Common myeloid progenitor, CD34-positive (primary cell): ENCODE measurements at regions of chr15 and their contacts with region 1.

Region 1: GRCh38 chr15:68650901-68651709 is 72.3 kb downstream of the CORO2B start:
- DNase-seq: peak; percentile 43 to 64 (median 55)
- H3K4me3 ChIP-seq: no peak overlapping the region
- H3K27ac ChIP-seq: no peak overlapping the region
- H3K4me1 ChIP-seq: peaks cover 0 to 13% (median 8%) of the 10 kb centered on the region in 4 experiments
- H3K27me3 ChIP-seq: no peaks in the 10 kb centered on the region

Region 2: DNA sequence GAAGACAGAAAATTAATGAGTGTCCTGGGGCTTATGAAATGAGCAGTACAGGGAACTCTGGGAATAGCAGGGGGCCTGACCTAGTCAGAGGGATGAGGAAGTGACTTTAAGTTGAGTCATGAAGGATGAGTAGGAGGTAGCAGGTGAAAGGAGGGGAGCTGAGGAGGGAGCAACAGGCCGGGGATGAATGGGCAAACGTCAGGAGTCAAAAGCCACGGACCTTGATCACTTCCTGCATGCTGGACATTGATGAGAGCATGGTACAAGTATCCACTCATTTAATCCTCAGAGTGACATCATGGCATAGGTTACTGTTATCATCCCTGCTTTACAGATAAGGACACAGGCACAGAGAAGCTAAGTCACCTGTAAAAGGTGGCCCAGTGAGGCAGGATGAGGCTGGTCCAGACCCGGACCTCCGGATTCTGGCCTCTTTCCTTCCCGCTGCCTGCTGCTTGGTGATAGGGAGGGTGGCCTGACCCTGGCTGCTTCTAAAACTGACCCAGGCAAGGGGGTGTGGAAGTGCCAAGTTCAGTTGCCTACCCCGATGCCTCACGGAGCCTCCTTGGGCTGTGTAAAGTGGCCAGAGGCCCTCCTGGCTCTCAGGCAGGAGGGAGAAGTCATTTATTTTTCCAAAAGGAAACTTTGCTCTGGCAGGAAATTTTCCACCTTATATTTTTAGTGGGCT is 64.7 kb before region 1 on chr15:
- CTCF ChIA-PET with region 1: no interaction called
- POLR2A ChIA-PET with region 1: no interaction called
- DNase-seq: no peak
- H3K4me3 ChIP-seq: no peak overlapping the region
- H3K27ac ChIP-seq: no peak overlapping the region
- H3K4me1 ChIP-seq: no peaks in the 10 kb centered on the region
- H3K27me3 ChIP-seq: no peaks in the 10 kb centered on the region

Region 3: DNA sequence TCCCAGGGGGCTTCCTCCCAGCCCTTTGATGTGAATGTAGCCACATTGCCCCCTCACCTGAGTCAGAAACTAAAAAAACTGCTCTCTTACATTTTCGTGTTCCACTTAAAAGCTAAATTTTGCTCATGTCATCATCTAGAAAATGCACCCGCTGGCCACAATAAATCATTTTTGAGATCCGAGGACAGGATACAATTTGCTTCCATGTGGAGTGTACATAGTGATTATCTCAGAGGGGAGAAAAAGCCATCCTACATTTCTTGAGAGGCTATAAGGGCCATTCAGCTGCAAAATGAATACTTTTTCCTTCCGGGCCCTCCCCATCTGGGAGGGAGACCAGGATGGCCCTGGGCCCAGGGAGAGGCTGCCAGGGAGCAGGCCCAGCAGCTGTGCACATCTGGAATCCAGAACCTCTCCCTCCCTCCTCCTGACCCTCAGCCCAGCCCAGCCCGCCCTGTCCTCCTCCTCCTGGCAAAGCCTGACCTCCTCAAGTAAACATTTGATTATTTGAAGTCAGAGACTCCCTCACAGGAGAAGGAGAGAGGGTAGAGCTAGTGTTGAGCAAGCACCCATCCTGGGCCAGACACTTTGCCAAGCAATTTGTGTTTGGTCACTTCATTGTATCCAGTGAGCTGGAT is 13.2 kb before region 1 on chr15:
- CTCF ChIA-PET with region 1: interaction called, 12 read pairs
- POLR2A ChIA-PET with region 1: no interaction called
- DNase-seq: no peak
- H3K4me3 ChIP-seq: no peak overlapping the region
- H3K27ac ChIP-seq: no peak overlapping the region
- H3K4me1 ChIP-seq: peaks cover 0 to 18% (median 14%) of the 10 kb centered on the region in 4 experiments
- H3K27me3 ChIP-seq: no peaks in the 10 kb centered on the region

Region 4: DNA sequence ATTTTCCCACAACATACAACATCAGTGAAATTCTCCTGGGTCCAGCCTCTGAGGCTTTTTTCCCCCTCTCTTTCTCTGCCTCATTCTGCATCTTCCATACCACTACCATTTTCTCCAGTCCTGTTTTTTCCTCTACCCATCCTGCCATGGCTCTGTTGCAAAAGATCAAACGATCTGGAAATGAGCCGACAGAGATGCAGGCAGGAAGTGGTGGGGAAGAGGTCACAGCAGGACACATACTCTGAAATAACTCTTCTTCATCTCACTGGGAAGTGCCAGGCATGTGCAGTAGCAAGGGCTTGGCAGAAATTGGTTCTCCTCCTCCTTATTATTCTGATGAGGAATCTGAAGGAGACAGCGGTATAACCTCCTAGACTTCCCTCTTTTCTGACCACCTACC is 42.0 kb after region 1 on chr15:
- CTCF ChIA-PET with region 1: no interaction called
- POLR2A ChIA-PET with region 1: no interaction called
- DNase-seq: peak in 2 of 3 donors; percentile 16 to 26
- H3K4me3 ChIP-seq: no peak overlapping the region
- H3K27ac ChIP-seq: no peak overlapping the region
- H3K4me1 ChIP-seq: peaks cover 0 to 6% (median 4%) of the 10 kb centered on the region in 4 experiments
- H3K27me3 ChIP-seq: no peaks in the 10 kb centered on the region

Region 5: DNA sequence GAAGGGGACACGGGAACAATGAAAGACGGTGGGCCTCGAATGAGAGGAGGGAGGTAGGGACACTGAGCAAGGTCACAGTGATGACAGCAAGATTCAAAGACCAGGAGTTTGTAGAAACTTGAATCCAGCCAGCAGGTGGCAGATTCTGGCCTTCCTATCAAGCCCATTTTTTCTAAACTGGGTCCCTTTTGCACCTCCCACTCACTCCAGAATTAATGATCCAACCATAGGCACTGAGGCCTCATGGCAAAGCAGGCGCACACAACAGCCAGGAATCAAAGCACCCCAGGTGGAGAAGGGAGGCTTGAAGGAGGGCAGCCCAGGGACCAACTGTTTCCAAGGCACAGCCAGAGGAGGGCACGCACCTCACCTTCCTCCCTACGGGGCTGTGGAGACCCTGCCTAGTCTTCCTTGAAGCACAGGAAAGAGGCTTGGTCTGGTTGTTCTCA is 79.4 kb after region 1 on chr15:
- CTCF ChIA-PET with region 1: no interaction called
- POLR2A ChIA-PET with region 1: no interaction called
- DNase-seq: peak; percentile 65 to 82 (median 74)
- H3K4me3 ChIP-seq: no peak overlapping the region
- H3K27ac ChIP-seq: no peak overlapping the region
- H3K4me1 ChIP-seq: peaks cover 13 to 35% (median 18%) of the 10 kb centered on the region in 4 experiments
- H3K27me3 ChIP-seq: no peaks in the 10 kb centered on the region

Region 6: GRCh38 chr15:69045808-69046207 is 394.7 kb after region 1 on chr15:
- CTCF ChIA-PET with region 1: no interaction called
- POLR2A ChIA-PET with region 1: no interaction called
- DNase-seq: no peak
- H3K4me3 ChIP-seq: no peak overlapping the region
- H3K27ac ChIP-seq: no peak overlapping the region
- H3K4me1 ChIP-seq: no peaks in the 10 kb centered on the region
- H3K27me3 ChIP-seq: no peaks in the 10 kb centered on the region